IMR-90 (cell line): ENCODE measurements at regions of chr9 and their contacts with region 1.

Region 1: DNA sequence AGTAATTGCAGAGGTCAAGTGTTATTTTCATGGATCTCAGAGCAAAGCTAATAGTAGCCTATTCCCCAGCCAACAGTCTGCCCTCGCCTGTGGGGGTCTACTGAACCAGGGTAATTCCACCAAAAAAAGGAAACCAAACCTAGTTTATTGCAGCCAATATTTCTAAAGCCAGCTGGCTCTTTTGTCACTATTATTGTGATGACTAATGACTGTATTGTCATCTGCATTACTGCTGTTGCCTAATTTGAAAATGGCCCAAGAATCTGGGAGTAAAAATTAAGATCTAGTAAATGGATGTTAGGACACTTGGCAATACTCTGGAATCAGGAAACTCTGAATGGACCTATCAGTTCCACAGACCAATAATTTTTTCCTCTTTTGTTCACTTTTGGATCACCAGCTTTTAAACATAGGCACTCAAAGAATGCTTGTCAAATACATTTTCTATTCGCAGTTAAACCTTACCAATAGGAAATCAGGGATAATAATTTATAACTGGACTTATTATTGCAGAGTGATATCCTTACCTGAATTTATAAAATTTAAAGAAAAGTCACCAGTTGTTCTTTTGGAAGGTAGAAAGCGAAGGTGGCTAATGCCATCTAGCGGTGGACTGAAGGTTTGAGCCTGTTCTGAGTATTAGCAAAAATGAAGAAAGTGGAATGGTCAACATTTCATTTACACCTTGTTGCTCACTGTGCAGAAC is 69.2 kb downstream of the SYK start:
- DNase-seq: peak; percentile 44
- ATAC-seq: peak; percentile 72
- H3K4me3 ChIP-seq: no peak overlapping the region
- H3K27ac ChIP-seq: no peak overlapping the region
- H3K4me1 ChIP-seq: no peaks in the 10 kb centered on the region
- H3K27me3 ChIP-seq: peaks cover 6% of the 10 kb centered on the region
- CTCF ChIP-seq: peak; percentile 83
- POLR2A ChIP-seq: no peak
- RAD21 ChIP-seq: peak; percentile 80

Region 2: DNA sequence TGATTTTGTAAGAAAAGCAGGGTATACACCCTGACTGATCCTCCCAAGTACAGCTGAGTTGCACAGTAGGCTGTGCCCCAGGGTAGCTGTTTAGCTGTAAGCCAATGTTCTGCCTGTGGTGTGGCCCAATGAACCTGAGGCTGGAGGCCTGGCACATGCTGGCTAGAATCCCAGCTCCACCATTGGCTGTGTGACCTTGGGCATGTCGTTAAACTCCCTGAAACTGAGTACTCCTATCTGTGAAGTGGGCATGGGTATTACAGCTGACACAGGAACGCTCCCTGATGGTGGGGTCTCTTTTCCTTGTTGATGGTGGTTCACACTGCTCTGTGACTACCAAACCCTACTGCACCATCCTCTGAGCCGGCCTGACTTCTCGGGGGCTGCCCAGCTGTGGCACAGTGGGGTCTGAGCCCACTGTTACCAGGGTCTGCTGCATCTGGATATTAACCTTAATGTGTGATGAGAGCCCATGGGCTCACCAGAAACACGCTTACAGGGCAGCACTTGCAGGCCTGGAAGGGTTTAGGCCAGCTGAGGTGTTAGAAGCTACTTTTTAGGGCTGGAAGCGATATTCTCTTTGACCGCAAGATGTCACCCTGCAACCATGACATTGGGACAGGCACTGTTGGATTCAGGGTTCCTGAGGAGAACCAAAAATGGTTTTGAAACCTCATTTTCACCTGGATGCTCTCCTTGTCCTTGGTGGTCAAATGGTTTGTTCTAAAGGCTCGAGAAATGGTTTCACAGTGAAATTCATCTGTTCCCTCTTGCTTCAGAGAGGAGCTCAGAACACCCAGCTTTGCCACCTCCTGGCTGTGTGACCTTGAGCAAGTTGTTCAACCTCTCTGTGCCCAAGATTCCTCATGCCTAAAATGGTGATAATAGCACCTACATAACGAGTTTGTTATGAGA is 1272.8 kb before region 1 on chr9:
- CTCF ChIA-PET with region 1: interaction called, 5 read pairs
- POLR2A ChIA-PET with region 1: interaction called, 3 read pairs
- dilution Hi-C with region 1: no loop called
- in situ Hi-C with region 1: loop called (anchors 10 kb)
- intact Hi-C with region 1: loop called (anchors 2 kb)
- DNase-seq: peak; percentile 59
- ATAC-seq: peak; percentile 81
- H3K4me3 ChIP-seq: no peak overlapping the region
- H3K27ac ChIP-seq: no peak overlapping the region
- H3K4me1 ChIP-seq: peaks cover 3% of the 10 kb centered on the region; the same call in 1 of the 2 replicates
- H3K27me3 ChIP-seq: peaks cover 36% of the 10 kb centered on the region
- CTCF ChIP-seq: peak; percentile 77
- POLR2A ChIP-seq: no peak
- RAD21 ChIP-seq: peak; percentile 88

Region 3: GRCh38 chr9:90142580-90142979 is 728.2 kb before region 1 on chr9:
- CTCF ChIA-PET with region 1: interaction called, 5 read pairs
- POLR2A ChIA-PET with region 1: no interaction called
- dilution Hi-C with region 1: no loop called
- in situ Hi-C with region 1: loop called (anchors 5 kb)
- intact Hi-C with region 1: loop called (anchors 1 kb)
- DNase-seq: peak; percentile 25
- ATAC-seq: no peak
- H3K4me3 ChIP-seq: no peak overlapping the region
- H3K27ac ChIP-seq: no peak overlapping the region
- H3K4me1 ChIP-seq: no peaks in the 10 kb centered on the region
- H3K27me3 ChIP-seq: peaks cover 2% of the 10 kb centered on the region; the same call in 1 of the 2 replicates
- CTCF ChIP-seq: peak; percentile 52
- POLR2A ChIP-seq: no peak
- RAD21 ChIP-seq: peak; percentile 20

Region 4: GRCh38 chr9:90240541-90240940 is 630.2 kb before region 1 on chr9:
- CTCF ChIA-PET with region 1: no interaction called
- POLR2A ChIA-PET with region 1: no interaction called
- dilution Hi-C with region 1: no loop called
- in situ Hi-C with region 1: loop called (anchors 10 kb)
- intact Hi-C with region 1: no loop called
- DNase-seq: no peak
- ATAC-seq: no peak
- H3K4me3 ChIP-seq: no peak overlapping the region
- H3K27ac ChIP-seq: no peak overlapping the region
- H3K4me1 ChIP-seq: no peaks in the 10 kb centered on the region
- H3K27me3 ChIP-seq: no peaks in the 10 kb centered on the region
- CTCF ChIP-seq: no peak
- POLR2A ChIP-seq: no peak
- RAD21 ChIP-seq: no peak

Region 5: GRCh38 chr9:90322296-90322695 is 548.5 kb before region 1 on chr9:
- CTCF ChIA-PET with region 1: no interaction called
- POLR2A ChIA-PET with region 1: no interaction called
- dilution Hi-C with region 1: no loop called
- in situ Hi-C with region 1: no loop called
- intact Hi-C with region 1: loop called (anchors 2 kb)
- DNase-seq: peak; percentile 9
- ATAC-seq: no peak
- H3K4me3 ChIP-seq: no peak overlapping the region
- H3K27ac ChIP-seq: no peak overlapping the region
- H3K4me1 ChIP-seq: no peaks in the 10 kb centered on the region
- H3K27me3 ChIP-seq: no peaks in the 10 kb centered on the region
- CTCF ChIP-seq: no peak
- POLR2A ChIP-seq: no peak
- RAD21 ChIP-seq: no peak